ENCODE measurements at regions of chr9 and their contacts with region 1.

Region 1: DNA sequence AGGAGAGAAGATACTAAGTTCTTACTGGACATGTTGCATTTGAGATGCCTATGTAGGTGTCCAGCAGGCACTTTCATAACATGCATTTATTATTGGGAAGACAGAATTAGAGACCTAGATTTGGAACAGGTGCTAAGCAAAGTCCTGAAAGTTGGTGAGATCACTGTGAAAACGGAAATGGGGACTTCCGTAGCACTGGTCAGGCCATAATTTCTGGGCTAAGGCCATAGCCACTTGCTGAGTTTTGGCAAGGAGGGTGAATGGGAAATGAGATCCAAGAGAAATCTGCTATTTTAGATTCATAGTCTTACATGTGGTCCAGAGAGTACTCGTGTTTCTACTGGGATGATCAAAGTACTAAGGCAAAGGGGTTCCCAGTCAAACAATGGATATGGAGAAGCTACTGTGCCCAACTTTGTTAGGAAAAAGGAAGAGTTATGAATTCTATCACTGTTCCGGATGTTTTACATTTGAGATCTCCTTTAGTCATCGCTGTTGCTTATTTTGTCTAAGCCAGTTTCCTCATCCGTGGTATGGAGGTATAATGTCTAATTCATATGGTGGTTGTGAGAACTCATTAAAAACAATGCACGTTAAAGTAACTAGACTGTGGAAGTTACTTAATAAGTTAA is 33.4 kb downstream of the TEK start:
- DNase-seq: no peak
- ATAC-seq: no peak
- H3K4me3 ChIP-seq: no peak overlapping the region
- H3K4me3 Mint-ChIP-seq: no peak overlapping the region
- H3K27ac ChIP-seq: no peak overlapping the region
- H3K27ac Mint-ChIP-seq: no peak overlapping the region
- H3K4me1 ChIP-seq: no peaks in the 10 kb centered on the region
- H3K4me1 Mint-ChIP-seq: no peaks in the 10 kb centered on the region
- H3K27me3 ChIP-seq: no peaks in the 10 kb centered on the region
- H3K27me3 Mint-ChIP-seq: peaks cover 5 to 12% of the 10 kb centered on the region in 2 donors

Region 2: DNA sequence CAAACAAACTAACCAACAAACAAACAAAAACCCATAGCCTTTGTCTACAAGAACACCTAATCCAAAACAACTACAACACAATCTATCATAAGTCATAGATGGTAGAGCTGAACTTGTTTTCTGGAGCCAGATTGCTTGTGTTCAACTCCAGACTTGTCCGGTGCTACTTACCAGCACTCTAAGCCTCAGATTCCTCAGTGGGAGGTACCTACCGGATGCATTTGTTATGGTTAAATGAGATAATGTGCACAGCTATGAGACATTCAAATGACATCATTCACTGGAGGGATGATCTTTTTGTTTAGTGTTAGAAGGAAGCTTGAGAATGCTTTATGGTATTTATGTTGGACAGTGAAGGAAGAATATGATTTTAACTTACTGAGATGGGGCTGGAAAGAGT is 1023.8 kb after region 1 on chr9:
- CTCF ChIA-PET with region 1: no interaction called
- POLR2A ChIA-PET with region 1: interaction called in 1 of 2 experiments, 13 read pairs
- DNase-seq: no peak
- ATAC-seq: no peak
- H3K4me3 ChIP-seq: no peak overlapping the region
- H3K4me3 Mint-ChIP-seq: no peak overlapping the region
- H3K27ac ChIP-seq: no peak overlapping the region
- H3K27ac Mint-ChIP-seq: no peak overlapping the region
- H3K4me1 ChIP-seq: no peaks in the 10 kb centered on the region
- H3K4me1 Mint-ChIP-seq: no peaks in the 10 kb centered on the region
- H3K27me3 ChIP-seq: no peaks in the 10 kb centered on the region
- H3K27me3 Mint-ChIP-seq: no peaks in the 10 kb centered on the region

Measured in T-cell (primary cell).